CD8-positive, alpha-beta T cell (primary cell): ENCODE measurements at regions of chr4 and their contacts with region 1.

Region 1: DNA sequence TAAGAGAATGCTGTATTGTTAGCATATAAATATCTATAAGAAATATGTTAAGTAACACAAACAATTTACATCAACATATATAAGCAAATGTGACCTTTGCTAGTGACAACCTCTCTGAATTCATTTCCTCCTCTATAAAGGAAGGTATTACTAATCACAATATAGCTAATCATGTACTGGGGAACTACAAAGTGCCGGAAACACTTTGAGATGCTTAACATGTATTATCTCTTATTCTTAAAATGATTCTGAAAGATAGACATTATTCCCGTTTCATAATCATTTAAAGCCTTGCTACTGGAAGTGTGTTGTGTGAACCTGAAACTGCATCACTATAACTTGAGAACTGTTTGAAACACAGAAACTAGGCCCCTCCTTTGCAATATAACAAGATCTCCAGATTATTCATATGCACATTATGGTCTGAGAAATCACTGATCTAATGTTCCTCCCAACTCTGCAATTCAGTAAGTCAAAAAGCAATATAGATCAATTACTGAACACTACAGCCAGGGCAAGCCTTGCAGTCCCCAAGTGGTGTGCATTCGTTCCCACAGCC is 54.0 kb downstream of the KLHL8 start:
- DNase-seq: no peak
- ATAC-seq: no peak
- H3K4me3 ChIP-seq: no peak overlapping the region
- H3K4me3 Mint-ChIP-seq: no peak overlapping the region
- H3K27ac ChIP-seq: no peak overlapping the region
- H3K27ac Mint-ChIP-seq: no peak overlapping the region
- H3K4me1 ChIP-seq: no peaks in the 10 kb centered on the region
- H3K4me1 Mint-ChIP-seq: no peaks in the 10 kb centered on the region
- H3K27me3 ChIP-seq: no peaks in the 10 kb centered on the region
- H3K27me3 Mint-ChIP-seq: no peaks in the 10 kb centered on the region
- CTCF ChIP-seq: no peak

Region 2: GRCh38 chr4:87150498-87151261 is 15.7 kb before region 1 on chr4:
- CTCF ChIA-PET with region 1: interaction called, 10 read pairs
- POLR2A ChIA-PET with region 1: no interaction called
- intact Hi-C with region 1: no loop called
- DNase-seq: peak in 8 of 9 experiments; percentile 17 to 78 (median 40)
- ATAC-seq: peak; percentile 84
- H3K4me3 ChIP-seq: no peak overlapping the region
- H3K4me3 Mint-ChIP-seq: no peak overlapping the region
- H3K27ac ChIP-seq: no peak overlapping the region
- H3K27ac Mint-ChIP-seq: no peak overlapping the region
- H3K4me1 ChIP-seq: no peaks in the 10 kb centered on the region
- H3K4me1 Mint-ChIP-seq: no peaks in the 10 kb centered on the region
- H3K27me3 ChIP-seq: no peaks in the 10 kb centered on the region
- H3K27me3 Mint-ChIP-seq: no peaks in the 10 kb centered on the region
- CTCF ChIP-seq: peak; percentile 91

Region 3: GRCh38 chr4:87196927-87197326 is 30.6 kb after region 1 on chr4:
- CTCF ChIA-PET with region 1: no interaction called
- POLR2A ChIA-PET with region 1: no interaction called
- intact Hi-C with region 1: loop called in 1 of 2 experiments (anchors 5 kb)
- DNase-seq: no peak
- ATAC-seq: no peak
- H3K4me3 ChIP-seq: no peak overlapping the region
- H3K4me3 Mint-ChIP-seq: no peak overlapping the region
- H3K27ac ChIP-seq: no peak overlapping the region
- H3K27ac Mint-ChIP-seq: no peak overlapping the region
- H3K4me1 ChIP-seq: no peaks in the 10 kb centered on the region
- H3K4me1 Mint-ChIP-seq: peaks cover 34% of the 10 kb centered on the region
- H3K27me3 ChIP-seq: no peaks in the 10 kb centered on the region
- H3K27me3 Mint-ChIP-seq: no peaks in the 10 kb centered on the region
- CTCF ChIP-seq: no peak

Region 4: DNA sequence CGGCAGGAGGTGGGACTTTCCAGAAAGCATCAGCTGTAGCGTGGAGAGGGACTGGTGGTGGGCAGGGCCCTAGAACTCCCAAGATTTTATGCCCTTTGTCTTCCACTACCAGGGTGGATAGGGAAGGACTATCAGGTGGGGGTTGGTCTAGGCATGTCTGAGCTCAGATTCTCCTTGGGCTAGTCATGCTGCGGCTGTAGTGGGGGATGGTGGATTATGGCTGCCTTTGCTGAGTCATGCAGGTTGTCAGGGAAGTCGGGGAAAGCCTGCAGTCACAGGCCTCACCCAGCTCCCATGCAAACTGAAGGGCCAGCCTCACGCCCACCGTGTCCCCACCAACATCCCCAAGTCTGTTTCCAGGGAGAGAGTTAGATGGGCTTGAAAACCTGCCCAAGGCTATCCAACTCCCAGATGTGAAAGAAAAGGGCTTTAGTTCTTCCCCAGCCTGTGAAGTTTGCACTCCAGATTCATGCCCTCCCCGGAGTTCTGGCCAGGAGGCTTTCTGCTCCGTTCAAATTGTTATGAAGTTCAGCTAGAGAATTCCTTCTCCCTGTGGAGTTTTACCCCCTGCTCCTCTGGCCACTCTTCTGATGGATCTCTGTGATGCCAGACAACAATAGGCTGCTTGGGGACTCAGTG is 653.0 kb after region 1 on chr4:
- CTCF ChIA-PET with region 1: no interaction called
- POLR2A ChIA-PET with region 1: no interaction called
- intact Hi-C with region 1: no loop called
- DNase-seq: no peak
- ATAC-seq: no peak
- H3K4me3 ChIP-seq: no peak overlapping the region
- H3K4me3 Mint-ChIP-seq: no peak overlapping the region
- H3K27ac ChIP-seq: no peak overlapping the region
- H3K27ac Mint-ChIP-seq: no peak overlapping the region
- H3K4me1 ChIP-seq: no peaks in the 10 kb centered on the region
- H3K4me1 Mint-ChIP-seq: no peaks in the 10 kb centered on the region
- H3K27me3 ChIP-seq: no peaks in the 10 kb centered on the region
- H3K27me3 Mint-ChIP-seq: peaks cover 18% of the 10 kb centered on the region
- CTCF ChIP-seq: no peak